ENCODE measurements at regions of chr12 and their contacts with region 1.

Region 1: GRCh38 chr12:118404876-118405521 is 28.6 kb downstream of the SUDS3 start:
- DNase-seq: no peak
- H3K4me3 ChIP-seq: no peak overlapping the region
- H3K27ac ChIP-seq: peak overlapping the region in 3 of 4 donors; percentile 17 to 27 (median 19)
- H3K4me1 ChIP-seq: peaks cover 0 to 38% (median 28%) of the 10 kb centered on the region in 4 donors
- H3K27me3 ChIP-seq: no peaks in the 10 kb centered on the region
- CTCF ChIP-seq: peak; percentile 68 to 79 (median 74)
- EP300 ChIP-seq: no peak
- POLR2A ChIP-seq: no peak

Region 2: DNA sequence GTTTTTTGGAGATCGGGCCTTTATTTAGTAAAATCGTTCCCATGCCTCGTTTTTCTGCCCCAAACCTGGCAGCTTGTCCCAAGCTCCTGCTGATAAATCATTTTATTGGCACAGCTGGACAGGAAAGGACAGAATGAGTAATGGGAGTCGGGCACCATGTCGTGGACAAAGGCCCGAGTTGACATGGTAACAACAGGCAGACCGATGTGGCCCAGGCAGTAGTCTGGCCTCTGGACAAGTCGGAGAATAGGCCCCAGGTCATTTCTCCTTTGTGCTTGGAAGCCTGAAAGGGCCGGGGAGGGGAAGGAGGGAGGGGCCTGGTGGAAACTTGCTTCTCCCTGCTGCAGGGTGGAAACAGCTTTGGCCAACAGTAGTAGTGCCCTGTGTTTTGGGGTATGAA is 206.3 kb after region 1 on chr12:
- intact Hi-C with region 1: no loop called
- DNase-seq: no peak
- H3K4me3 ChIP-seq: no peak overlapping the region
- H3K27ac ChIP-seq: peak overlapping the region; percentile 32 to 51 (median 49)
- H3K4me1 ChIP-seq: peaks cover 0 to 27% (median 17%) of the 10 kb centered on the region in 4 donors
- H3K27me3 ChIP-seq: no peaks in the 10 kb centered on the region
- CTCF ChIP-seq: no peak
- EP300 ChIP-seq: no peak
- POLR2A ChIP-seq: no peak

Region 3: GRCh38 chr12:118625050-118625675 is 220.2 kb after region 1 on chr12:
- intact Hi-C with region 1: loop called (anchors 5 kb)
- DNase-seq: no peak
- H3K4me3 ChIP-seq: no peak overlapping the region
- H3K27ac ChIP-seq: no peak overlapping the region
- H3K4me1 ChIP-seq: no peaks in the 10 kb centered on the region
- H3K27me3 ChIP-seq: no peaks in the 10 kb centered on the region
- CTCF ChIP-seq: no peak
- EP300 ChIP-seq: no peak
- POLR2A ChIP-seq: no peak

Region 4: GRCh38 chr12:118850244-118850825 is 445.3 kb after region 1 on chr12:
- intact Hi-C with region 1: loop called (anchors 10 kb)
- DNase-seq: no peak
- H3K4me3 ChIP-seq: no peak overlapping the region
- H3K27ac ChIP-seq: no peak overlapping the region
- H3K4me1 ChIP-seq: no peaks in the 10 kb centered on the region
- H3K27me3 ChIP-seq: peaks cover 0 to 21% (median 0%) of the 10 kb centered on the region in 4 donors
- CTCF ChIP-seq: peak in 1 of 3 experiments; percentile 29
- EP300 ChIP-seq: no peak
- POLR2A ChIP-seq: no peak

Region 5: GRCh38 chr12:119036878-119037825 is 632.2 kb after region 1 on chr12:
- intact Hi-C with region 1: loop called (anchors 2 kb)
- DNase-seq: no peak
- H3K4me3 ChIP-seq: no peak overlapping the region
- H3K27ac ChIP-seq: no peak overlapping the region
- H3K4me1 ChIP-seq: no peaks in the 10 kb centered on the region
- H3K27me3 ChIP-seq: peaks cover 0 to 23% (median 0%) of the 10 kb centered on the region in 4 donors
- CTCF ChIP-seq: peak; percentile 44 to 53 (median 48)
- EP300 ChIP-seq: no peak
- POLR2A ChIP-seq: no peak